Posterior vena cava (tissue), 2 donors: ENCODE measurements at regions of chr18 and their contacts with region 1.

Region 1: DNA sequence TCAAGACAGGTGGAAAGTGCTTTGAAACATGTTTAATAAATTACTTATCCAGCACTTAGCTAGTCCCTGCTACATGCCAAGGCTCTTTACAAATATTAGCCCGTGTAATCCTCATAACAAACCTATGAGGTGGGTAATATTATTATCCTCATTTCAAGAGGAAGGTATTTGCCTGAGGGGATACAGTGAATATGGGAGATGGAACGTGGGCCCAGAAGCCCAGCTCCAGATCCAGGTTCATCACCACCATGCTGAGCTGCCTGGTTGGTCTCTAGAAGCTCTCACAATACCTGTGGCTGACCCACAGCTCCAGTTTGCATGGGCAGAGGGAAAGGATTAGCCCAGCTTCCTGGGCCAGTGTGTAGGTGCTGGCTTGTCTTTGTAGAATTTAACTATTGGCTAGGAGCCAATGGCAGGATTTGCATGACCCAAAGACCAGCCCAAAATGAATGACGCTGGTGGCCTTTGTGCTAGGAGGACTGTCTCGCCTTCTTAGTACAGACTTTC is 61.6 kb upstream of the ATP8B1 start:
- DNase-seq: no peak

Region 2: DNA sequence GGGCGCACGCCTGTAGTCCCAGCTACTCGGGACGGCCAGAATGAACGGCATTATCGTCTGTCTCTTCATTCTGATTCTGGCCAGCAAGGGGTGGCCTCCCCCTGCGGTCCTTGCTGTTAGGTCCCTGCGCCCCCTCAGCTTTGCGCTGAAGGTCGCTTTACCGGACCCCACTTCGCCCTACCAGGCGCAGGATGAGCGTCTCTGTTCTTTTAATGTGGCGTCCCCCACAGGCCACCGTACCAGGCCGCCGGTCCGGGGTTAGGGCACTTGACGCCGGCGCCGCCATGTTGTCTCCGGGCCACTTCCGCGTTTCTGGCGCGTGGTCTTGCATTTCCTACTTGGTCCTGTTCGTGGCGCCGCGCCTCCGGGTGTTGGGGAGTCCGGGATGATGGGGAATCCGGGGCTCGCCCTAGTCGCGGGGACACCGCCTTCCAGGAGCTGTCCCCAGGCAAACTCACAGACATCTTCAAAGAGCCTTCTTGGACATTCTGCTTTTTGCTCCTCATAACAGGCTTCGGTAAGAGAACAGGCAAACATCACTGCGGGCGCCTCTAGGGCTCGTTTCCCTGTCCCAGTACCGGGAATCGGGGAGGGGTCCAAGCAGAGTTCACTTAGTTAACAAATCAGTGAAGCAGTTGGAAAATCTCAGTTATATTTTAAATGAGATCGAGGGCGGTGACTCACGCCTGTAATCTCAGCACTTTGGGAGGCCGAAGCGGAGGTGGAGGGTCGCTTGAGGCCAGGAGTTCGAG is 234.5 kb before region 1 on chr18:
- intact Hi-C with region 1: no loop called
- DNase-seq: peak; percentile 99

Region 3: DNA sequence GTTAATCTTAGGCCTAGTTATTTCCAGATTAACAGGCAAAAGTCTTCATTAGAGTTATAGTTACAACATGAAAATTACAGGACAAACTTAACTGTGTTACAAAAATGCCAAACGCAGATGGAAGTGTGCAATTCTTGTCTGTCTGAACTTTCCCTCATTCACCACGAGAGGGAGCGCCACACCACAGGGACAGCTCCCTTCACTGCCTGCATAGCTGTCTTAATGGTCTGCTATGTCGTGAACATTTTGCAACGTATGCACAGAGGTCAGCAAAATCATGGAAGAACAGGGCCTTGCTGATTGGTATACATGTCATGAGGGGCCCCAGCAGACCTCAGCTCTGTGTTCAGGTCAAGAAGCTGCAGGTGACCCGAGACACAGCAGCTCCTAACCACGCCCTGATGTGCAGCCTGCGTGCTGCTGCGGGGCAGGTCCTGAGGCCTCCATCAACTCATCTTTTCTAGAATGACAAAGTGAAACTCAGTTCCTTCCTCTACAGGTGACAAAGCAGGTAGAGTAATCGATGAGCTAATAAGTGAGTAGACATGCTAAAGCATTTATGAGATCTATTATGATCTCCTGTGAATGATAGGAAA is 17.2 kb after region 1 on chr18:
- intact Hi-C with region 1: no loop called
- DNase-seq: peak; percentile 86

Region 4: DNA sequence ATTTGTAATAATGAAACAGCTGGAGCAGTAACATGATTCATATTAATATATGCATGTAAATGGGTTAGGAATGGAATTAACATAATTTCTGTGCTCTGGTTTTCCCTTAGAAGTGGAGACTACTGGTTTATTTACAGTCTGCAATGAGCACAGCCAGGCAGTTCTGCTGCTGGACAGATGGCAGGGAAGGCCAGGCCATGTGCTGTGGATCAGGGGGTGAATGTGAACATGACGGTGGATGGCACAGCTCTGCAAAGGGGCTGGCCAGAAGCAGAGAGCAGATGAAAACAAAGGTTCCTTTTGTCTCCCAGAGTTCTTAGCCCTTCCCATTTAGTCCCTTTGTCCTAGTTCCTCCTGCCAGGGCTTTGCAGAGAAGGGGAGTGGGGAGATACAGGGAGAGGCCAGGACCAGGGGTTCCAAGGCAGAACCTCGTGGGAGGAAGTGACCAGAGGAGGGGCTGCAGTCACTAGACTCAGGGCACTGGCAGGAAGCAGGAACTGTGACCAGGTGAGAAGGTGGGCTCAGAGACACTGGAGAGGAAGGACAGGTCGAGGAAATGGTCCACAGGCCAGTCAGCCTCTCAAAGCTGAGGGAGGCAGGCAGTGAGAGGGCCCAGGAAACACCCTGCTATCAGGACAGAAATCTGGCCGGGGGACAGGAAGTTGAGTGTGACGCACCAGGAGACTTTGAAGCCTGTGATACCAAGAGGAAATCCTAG is 51.4 kb after region 1 on chr18:
- intact Hi-C with region 1: no loop called
- DNase-seq: no peak

Region 5: GRCh38 chr18:59159986-59160385 is 1295.3 kb after region 1 on chr18:
- intact Hi-C with region 1: loop called in 1 of 2 experiments (anchors 5 kb)
- DNase-seq: no peak